Mammary epithelial cell (primary cell): ENCODE measurements at regions of chr19 and their contacts with region 1.

Region 1: DNA sequence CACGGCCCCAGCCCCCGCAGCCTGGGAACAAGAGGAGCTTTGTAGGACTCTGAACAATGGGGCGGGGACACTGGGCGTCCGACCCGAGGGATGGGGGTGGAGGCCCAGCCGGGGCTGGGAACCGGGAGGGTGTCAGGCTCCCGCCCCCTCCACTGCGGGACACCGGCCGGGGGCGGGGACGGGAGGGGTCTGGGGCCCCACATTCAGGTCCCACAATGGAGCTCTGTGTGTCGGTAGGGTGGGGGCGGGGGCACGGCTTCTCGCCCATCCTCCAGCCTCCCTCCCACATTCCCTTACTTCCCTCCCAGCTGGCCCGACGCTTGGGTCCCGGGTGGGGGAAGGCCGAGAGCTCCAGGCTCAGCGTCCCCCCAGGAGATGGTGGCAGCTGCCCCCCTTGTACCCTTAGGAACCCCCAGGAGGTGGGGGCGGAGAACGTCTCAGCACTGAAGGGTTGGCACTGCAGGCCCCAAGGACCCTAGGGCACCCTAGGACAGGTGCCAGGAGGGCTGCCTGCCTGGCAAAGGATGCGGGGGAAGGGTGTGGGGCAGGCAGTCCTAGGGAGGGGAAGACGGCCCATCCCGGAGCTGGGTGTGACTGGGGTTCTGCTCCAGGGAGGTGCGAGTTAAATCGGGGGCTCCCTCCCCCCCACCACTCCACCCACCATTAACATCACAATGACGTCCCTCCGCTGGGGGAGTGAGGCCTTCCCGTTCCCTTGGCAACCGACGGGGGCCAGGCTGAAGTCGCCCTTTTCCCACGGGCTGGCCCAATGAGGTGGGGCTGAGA is 5.3 kb downstream of the TTYH1 start:
- DNase-seq: no peak
- H3K4me3 ChIP-seq: no peak overlapping the region
- H3K27ac ChIP-seq: no peak overlapping the region
- H3K4me1 ChIP-seq: no peaks in the 10 kb centered on the region
- H3K27me3 ChIP-seq: peaks cover 11% of the 10 kb centered on the region
- CTCF ChIP-seq: no peak

Region 2: DNA sequence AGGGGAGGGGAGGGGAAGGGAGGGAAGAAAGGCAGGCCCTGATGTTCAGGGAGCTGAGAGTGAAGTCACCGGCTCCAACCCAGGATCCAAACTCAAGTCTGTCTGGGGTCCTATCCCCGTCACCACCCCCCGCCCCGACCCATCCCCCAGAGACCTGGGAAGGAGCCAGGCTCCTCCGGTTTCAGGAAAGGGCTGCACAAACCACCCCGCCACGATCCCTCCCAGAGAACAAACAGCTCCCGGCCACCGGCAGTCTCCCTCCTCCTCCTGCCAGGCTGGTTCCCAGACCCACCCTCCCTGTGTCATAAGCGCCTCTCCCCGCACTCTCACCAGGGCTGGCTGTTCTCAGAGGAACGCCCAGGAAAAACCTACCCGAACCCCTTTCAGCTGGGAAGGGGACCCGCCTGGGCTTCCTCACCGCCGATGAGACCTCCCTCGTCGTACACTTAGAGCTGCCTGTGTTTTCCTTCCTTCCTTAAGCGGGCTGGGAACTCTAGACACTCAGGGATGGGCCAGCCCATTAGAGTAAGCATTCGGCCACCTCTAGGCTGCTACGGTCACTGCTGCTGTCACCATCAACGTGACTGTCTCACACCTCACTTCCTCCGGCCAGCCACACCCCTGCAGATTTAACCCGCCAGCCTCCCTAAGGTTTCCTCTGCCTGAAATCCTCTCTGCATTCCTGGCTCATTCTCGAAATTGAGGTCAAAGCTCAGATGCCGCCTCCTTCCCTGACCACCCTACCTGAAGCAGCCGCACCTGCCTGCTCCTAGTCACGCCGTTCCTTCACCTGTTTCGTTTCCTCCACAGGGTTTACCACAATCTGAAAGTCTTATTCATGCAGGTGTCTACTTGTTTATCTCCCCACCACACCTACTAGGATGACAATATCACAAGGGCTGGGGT is 648.6 kb after region 1 on chr19:
- CTCF ChIA-PET with region 1: no interaction called
- dilution Hi-C with region 1: loop called (anchors 5 kb)
- in situ Hi-C with region 1: no loop called
- intact Hi-C with region 1: no loop called
- DNase-seq: peak; percentile 78
- H3K4me3 ChIP-seq: peak overlapping the region; percentile 7 to 46 (median 24)
- H3K27ac ChIP-seq: no peak overlapping the region
- H3K4me1 ChIP-seq: peaks cover 12% of the 10 kb centered on the region
- H3K27me3 ChIP-seq: no peaks in the 10 kb centered on the region
- CTCF ChIP-seq: no peak